A673 (cell line): ENCODE measurements at regions of chr4 and their contacts with region 1.

Region 1: GRCh38 chr4:14559646-14560045 is 442.6 kb upstream of the CPEB2 start:
- DNase-seq: peak; percentile 93
- H3K4me3 ChIP-seq: no peak overlapping the region
- H3K27ac ChIP-seq: peak overlapping the region; percentile 92
- H3K4me1 ChIP-seq: peaks cover 42% of the 10 kb centered on the region
- H3K27me3 ChIP-seq: no peaks in the 10 kb centered on the region
- CTCF ChIP-seq: no peak

Region 2: DNA sequence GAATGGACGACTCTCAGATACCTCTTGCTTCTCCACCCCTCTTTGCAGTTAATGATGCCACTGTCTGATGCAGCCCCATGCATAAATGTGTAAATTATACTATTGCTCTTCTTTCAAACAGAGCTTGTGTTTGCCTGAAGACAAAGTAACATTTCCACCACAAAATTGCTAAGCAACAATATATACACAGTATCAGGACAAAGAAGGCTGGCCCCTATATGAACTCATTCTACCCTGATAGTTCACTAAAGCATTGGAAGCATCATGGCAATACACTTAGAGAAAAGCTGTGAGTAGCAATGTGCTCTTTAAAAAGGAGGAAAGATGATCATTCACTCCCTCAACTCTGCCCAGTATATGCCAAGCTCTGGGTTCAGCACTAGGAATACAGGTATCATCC is 15.6 kb after region 1 on chr4:
- CTCF ChIA-PET with region 1: no interaction called
- POLR2A ChIA-PET with region 1: no interaction called
- intact Hi-C with region 1: no loop called
- DNase-seq: no peak
- H3K4me3 ChIP-seq: no peak overlapping the region
- H3K27ac ChIP-seq: no peak overlapping the region
- H3K4me1 ChIP-seq: peaks cover 5% of the 10 kb centered on the region
- H3K27me3 ChIP-seq: no peaks in the 10 kb centered on the region
- CTCF ChIP-seq: no peak

Region 3: DNA sequence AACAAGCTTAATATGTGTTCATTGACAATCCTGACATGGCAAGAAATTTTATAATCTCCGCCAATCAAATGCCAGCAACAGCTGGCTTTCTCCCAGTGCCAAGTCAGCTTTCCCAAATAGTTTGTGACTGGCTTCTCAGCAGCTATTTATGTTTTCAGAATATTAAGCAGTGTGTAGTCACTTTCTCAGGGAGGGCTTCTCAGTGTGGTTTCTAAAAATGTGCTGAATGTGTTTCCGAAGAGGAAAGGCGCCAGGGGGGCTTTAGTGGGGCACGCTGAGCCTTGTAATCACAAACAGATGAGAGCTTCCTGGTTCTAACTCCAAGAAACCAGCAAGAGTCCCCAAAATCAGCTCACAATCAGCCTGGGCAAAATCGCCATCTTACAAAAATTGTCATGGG is 184.0 kb after region 1 on chr4:
- CTCF ChIA-PET with region 1: no interaction called
- POLR2A ChIA-PET with region 1: interaction called, 6 read pairs
- intact Hi-C with region 1: loop called (anchors 1 kb)
- DNase-seq: peak; percentile 98
- H3K4me3 ChIP-seq: no peak overlapping the region
- H3K27ac ChIP-seq: peak overlapping the region; percentile 99
- H3K4me1 ChIP-seq: peaks cover 44% of the 10 kb centered on the region
- H3K27me3 ChIP-seq: no peaks in the 10 kb centered on the region
- CTCF ChIP-seq: no peak